OCI-LY7 (cell line): ENCODE measurements at regions of chr15 and their contacts with region 1.

Region 1: GRCh38 chr15:64162870-64163658 is at the start of gene PPIB:
- DNase-seq: peak; percentile 98
- H3K4me3 ChIP-seq: peak within 1 kb of the TSS; percentile 86
- H3K27ac ChIP-seq: peak within 1 kb of the TSS; percentile 65
- H3K4me1 ChIP-seq: peaks cover 29% of the 10 kb centered on the region
- CTCF ChIP-seq: peak; percentile 70
- total RNA-seq, gene PPIB: 243 and 263 TPM in 2 replicates

Region 2: DNA sequence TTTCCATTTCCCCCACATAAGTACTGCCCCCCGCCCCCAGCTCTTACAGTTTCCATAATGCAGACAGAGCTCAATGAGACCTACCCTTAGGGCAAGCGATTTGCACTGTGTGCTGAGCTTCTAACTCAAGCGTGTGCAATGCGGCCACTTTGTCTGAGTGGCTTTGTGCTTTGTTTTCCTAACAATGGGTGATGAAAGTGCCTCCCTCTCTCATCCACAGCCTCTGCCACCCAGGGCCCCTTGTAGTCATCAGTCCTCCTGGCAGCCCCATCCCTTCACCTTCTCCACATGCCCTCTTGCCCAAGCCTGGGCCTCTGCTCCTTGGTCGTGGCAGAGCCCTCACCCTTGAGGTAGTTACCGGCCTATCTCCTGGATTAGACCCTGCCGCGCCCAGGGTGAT is 134.0 kb before region 1 on chr15:
- CTCF ChIA-PET with region 1: no interaction called
- POLR2A ChIA-PET with region 1: no interaction called
- intact Hi-C with region 1: no loop called
- DNase-seq: no peak
- H3K4me3 ChIP-seq: no peak overlapping the region
- H3K27ac ChIP-seq: no peak overlapping the region
- H3K4me1 ChIP-seq: no peaks in the 10 kb centered on the region
- CTCF ChIP-seq: no peak

Region 3: DNA sequence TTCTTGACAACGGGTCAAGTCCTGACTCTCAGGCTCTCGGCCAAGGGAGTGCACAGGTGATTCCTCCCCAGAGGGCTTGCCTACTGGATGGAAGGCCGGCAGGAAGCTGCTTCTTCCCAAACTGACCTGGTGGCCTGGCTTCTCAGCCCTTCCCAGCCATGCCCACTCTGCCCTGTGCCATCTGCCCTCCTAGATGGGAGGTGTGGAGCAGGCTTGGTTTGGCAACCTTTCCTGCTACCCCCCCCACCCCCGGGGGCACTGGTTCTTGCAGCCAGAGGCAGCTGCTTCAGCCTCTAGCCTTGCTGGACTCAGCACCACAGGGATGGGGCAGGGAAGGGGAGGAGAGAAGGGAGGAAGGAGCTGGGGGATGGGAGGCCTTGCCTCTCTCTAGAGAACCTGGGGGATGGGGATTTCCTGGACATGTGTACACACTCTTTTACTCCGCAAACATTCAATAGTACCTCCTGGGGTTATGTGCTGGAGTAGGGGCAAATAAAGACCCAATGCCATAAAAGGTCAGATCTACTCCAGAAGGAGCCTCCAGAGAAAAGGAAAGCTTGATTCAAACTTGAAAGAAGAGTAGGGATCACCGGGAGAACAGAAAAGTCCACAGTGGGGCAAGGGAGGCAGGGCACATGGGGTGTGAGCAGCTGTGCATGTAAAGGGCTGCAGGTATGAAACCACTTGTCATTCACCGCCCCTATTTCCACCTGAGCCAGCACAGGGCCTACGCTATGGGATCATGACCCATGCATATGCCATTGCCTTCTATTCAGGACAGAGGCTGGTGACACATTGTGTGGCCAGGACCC is 112.6 kb before region 1 on chr15:
- CTCF ChIA-PET with region 1: no interaction called
- POLR2A ChIA-PET with region 1: no interaction called
- intact Hi-C with region 1: no loop called
- DNase-seq: no peak
- H3K4me3 ChIP-seq: no peak overlapping the region
- H3K27ac ChIP-seq: no peak overlapping the region
- H3K4me1 ChIP-seq: peaks cover 16% of the 10 kb centered on the region
- CTCF ChIP-seq: no peak

Region 4: DNA sequence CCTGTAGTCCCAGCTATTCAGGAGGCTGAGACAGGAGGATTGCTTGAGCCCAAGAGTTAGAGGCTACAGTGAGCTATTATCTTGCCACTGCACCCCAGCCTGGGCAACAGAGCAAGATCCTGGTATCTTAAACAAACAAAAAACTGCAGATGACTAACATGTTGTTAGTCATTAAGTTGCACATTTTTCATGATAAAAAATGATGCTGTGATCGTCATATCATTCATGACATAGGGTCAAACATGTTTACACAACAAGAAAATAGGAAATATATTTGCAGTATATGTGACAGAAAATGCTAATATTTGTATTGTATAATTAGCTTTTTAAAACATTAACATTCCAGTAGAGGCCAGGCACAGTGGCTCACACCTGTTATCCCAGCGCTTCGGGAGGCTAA is 96.6 kb before region 1 on chr15:
- CTCF ChIA-PET with region 1: no interaction called
- POLR2A ChIA-PET with region 1: no interaction called
- intact Hi-C with region 1: no loop called
- DNase-seq: no peak
- H3K4me3 ChIP-seq: no peak overlapping the region
- H3K27ac ChIP-seq: no peak overlapping the region
- H3K4me1 ChIP-seq: peaks cover 17% of the 10 kb centered on the region
- CTCF ChIP-seq: no peak

Region 5: GRCh38 chr15:64355944-64356709 is 193.1 kb after region 1 on chr15 and contains the start of gene CSNK1G1:
- CTCF ChIA-PET with region 1: no interaction called
- POLR2A ChIA-PET with region 1: no interaction called
- intact Hi-C with region 1: loop called (anchors 5 kb)
- DNase-seq: peak; percentile 95
- H3K4me3 ChIP-seq: peak within 1 kb of the TSS; percentile 87
- H3K27ac ChIP-seq: peak within 1 kb of the TSS; percentile 56
- H3K4me1 ChIP-seq: peaks cover 19% of the 10 kb centered on the region
- CTCF ChIP-seq: peak; percentile 42; the same call in 1 of the 2 replicates
- total RNA-seq, gene CSNK1G1: 8.8 and 11.6 TPM in 2 replicates

Region 6: DNA sequence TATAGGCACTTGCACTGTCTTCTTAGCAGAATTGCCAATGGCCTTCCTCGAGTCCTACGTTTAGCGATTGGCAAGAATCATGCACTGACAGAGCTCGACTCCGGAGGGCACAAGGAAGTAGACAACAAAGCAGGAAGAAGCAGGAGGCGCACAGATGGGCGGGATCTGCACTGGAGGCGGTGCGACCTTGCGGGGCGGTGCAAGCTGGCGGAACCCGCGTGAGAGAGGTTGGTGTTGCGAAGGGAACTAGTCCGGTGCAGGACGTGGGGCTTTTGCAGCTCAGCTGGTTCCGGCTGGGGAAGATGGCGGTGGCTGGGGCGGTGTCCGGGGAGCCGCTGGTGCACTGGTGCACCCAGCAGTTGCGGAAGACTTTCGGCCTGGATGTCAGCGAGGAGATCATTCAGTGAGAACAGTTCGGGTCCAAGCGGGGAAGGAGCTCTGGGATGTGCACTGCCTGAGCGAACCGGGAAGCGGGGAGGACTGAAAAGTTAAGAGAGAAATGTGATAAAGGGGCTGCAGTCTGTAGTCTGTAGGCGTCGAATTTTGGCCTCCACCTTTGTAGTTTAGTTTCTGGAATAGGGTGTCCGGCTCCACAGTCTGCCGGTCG is 224.6 kb after region 1 on chr15 and contains the start of gene TRIP4:
- CTCF ChIA-PET with region 1: no interaction called
- POLR2A ChIA-PET with region 1: no interaction called
- intact Hi-C with region 1: loop called (anchors 2 kb)
- DNase-seq: peak; percentile 95
- H3K4me3 ChIP-seq: peak within 1 kb of the TSS; percentile 92
- H3K27ac ChIP-seq: peak within 1 kb of the TSS; percentile 50
- H3K4me1 ChIP-seq: peaks cover 15% of the 10 kb centered on the region
- CTCF ChIP-seq: 0 out of 2 replicates have a peak, but pooled peaks have one; percentile 18
- total RNA-seq, gene TRIP4: 9.3 TPM in 2 replicates